Activated B cell treated with CpG ODN at 0.5 μM for 24 hours (primary cell): ENCODE measurements at regions of chrX and their contacts with region 1.

Region 1: GRCh38 chrX:41350976-41351569 is 17.1 kb downstream of the DDX3X start:
- DNase-seq: no peak
- ATAC-seq: no peak
- H3K4me3 Mint-ChIP-seq: no peak overlapping the region
- H3K27ac Mint-ChIP-seq: peak overlapping the region; percentile 50
- H3K4me1 Mint-ChIP-seq: peaks cover 13% of the 10 kb centered on the region
- H3K27me3 Mint-ChIP-seq: no peaks in the 10 kb centered on the region
- CTCF ChIP-seq: no peak

Region 2: GRCh38 chrX:41589634-41590270 is 238.7 kb after region 1 on chrX:
- CTCF ChIA-PET with region 1: no interaction called
- POLR2A ChIA-PET with region 1: no interaction called
- intact Hi-C with region 1: loop called (anchors 5 kb)
- DNase-seq: no peak
- ATAC-seq: no peak
- H3K4me3 Mint-ChIP-seq: no peak overlapping the region
- H3K27ac Mint-ChIP-seq: no peak overlapping the region
- H3K4me1 Mint-ChIP-seq: peaks cover 7% of the 10 kb centered on the region
- H3K27me3 Mint-ChIP-seq: no peaks in the 10 kb centered on the region
- CTCF ChIP-seq: no peak